Calu3 (cell line): ENCODE measurements at regions of chr6 and their contacts with region 1.

Region 1: DNA sequence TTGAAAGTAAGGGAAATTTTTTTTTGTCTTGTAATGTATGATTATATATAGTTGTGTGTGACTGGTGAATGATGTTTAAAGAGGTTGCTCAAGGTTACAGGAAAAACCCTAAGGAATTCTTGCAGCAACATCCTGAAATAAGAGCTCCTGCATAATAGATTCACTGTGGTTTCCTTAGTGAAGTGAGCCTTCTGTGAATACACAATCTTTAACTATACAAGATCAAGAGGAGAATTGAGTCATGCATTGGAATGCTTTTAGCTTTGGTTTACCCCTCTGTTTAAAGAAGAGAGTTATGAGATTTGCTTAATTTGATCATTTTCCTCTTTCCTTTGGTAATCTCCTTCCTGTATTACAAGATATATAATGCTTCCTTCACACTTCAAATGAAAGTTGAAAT is 141.6 kb upstream of the EYA4 start:
- DNase-seq: peak; percentile 18
- H3K4me3 Mint-ChIP-seq: peak overlapping the region; percentile 46
- H3K27ac Mint-ChIP-seq: peak overlapping the region; percentile 85
- H3K4me1 Mint-ChIP-seq: peaks cover 47% of the 10 kb centered on the region
- H3K27me3 Mint-ChIP-seq: no peaks in the 10 kb centered on the region
- CTCF ChIP-seq: no peak

Region 2: GRCh38 chr6:133040094-133040802 is 59.3 kb before region 1 on chr6:
- CTCF ChIA-PET with region 1: no interaction called
- intact Hi-C with region 1: loop called (anchors 5 kb)
- DNase-seq: peak; percentile 61
- H3K4me3 Mint-ChIP-seq: no peak overlapping the region
- H3K27ac Mint-ChIP-seq: no peak overlapping the region
- H3K4me1 Mint-ChIP-seq: peaks cover 16% of the 10 kb centered on the region
- H3K27me3 Mint-ChIP-seq: no peaks in the 10 kb centered on the region
- CTCF ChIP-seq: peak; percentile 57

Region 3: GRCh38 chr6:133241086-133241900 is 141.7 kb after region 1 on chr6 and contains the start of gene EYA4:
- CTCF ChIA-PET with region 1: no interaction called
- intact Hi-C with region 1: loop called (anchors 10 kb)
- DNase-seq: peak; percentile 69
- H3K4me3 Mint-ChIP-seq: peak within 1 kb of the TSS; percentile 67
- H3K27ac Mint-ChIP-seq: peak within 1 kb of the TSS; percentile 81
- H3K4me1 Mint-ChIP-seq: peaks cover 6% of the 10 kb centered on the region
- H3K27me3 Mint-ChIP-seq: no peaks in the 10 kb centered on the region
- CTCF ChIP-seq: peak; percentile 12
- total RNA-seq, gene EYA4: 38.8 and 55.1 TPM in 2 replicates

Region 4: DNA sequence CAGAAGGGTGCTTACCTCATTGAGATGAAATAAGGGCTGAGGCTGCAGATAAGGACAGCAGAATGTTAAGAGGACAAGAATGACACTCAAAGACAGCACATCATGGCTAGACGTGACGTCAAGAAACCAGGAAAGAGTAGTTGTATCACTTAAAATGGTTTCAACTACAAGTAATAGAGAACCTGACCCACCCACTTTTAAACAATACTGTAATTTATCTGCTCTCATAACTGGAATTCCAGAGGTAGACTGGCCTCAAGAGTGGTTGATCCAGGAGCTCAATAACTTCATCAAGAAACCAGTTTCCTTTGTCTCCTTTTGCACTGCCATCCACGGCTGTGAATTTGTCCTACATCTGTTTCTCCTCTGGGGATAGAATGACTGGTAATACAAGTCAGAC is 328.7 kb after region 1 on chr6:
- CTCF ChIA-PET with region 1: no interaction called
- intact Hi-C with region 1: loop called (anchors 10 kb)
- DNase-seq: peak; percentile 73
- H3K4me3 Mint-ChIP-seq: peak overlapping the region; percentile 47
- H3K27ac Mint-ChIP-seq: peak overlapping the region; percentile 89
- H3K4me1 Mint-ChIP-seq: peaks cover 74% of the 10 kb centered on the region
- H3K27me3 Mint-ChIP-seq: no peaks in the 10 kb centered on the region
- CTCF ChIP-seq: no peak